Spleen (tissue), 13 donors: ENCODE measurements at regions of chr2 and their contacts with region 1.

Region 1: DNA sequence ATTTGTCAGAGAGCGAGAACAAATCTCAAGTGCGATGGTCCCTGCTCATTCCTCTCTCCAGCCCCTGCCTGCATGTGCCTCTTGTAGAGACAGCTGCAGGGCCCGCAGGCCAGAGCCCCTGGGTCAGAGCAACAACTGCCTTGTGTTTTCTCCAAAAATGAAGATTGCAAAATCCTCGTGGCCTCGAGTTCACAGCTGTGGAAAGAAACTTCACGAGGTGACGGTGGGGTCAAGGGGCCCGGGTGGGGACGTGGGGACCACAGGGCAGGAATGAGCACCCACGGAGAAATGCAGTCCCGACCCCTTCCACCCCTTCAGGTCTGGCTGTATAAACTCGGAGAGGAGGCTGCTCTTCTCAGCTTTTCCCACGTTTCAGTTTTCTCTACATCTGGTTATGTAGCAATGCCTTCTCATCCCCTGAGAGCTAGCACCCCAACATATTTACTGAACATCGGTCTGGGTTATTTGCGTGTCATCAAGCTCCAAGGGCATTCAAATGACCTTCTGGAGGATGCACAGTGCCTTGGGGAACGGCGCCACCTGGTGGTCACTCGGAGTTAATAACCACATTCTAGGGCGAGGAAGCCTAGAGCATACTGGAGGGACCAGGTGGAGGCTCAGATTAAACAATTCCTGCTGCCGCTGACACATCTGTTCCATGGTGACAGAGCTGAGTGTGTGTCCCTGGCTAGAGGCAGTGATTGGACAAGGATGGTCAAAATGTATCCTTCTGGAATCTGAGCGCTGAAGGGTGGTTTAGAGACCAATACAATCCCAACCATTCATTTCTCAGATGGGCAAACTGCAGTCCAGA is 91.4 kb upstream of the CYRIA start:
- DNase-seq: peak; percentile 94
- H3K4me3 ChIP-seq: no peak overlapping the region
- H3K27ac ChIP-seq: no peak overlapping the region
- H3K4me1 ChIP-seq: peaks cover 2 to 13% (median 7%) of the 10 kb centered on the region in 6 donors
- H3K27me3 ChIP-seq: no peaks in the 10 kb centered on the region
- CTCF ChIP-seq: peak; percentile 84 to 92 (median 87)
- POLR2A ChIP-seq: no peak

Region 2: DNA sequence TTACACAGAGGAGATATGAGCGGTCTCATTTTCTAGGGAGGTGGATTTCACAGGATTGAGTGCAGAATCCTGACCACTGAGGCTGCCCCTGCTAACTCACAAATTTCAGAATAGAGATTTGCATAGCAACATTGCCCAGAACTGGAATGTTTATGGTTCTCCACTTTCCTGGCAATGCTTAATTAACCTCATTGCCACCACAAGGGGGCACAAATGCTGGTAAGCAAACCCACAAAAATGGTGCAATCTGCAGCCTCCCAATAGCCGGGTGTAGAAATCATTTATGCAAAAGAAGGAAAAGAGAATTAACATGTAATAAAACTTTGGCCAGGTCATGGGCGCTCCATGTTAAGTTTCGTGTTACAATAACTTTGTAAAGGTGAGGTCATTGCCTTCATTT is 203.8 kb before region 1 on chr2:
- intact Hi-C with region 1: loop called (anchors 10 kb)
- DNase-seq: no peak
- H3K4me3 ChIP-seq: no peak overlapping the region
- H3K27ac ChIP-seq: no peak overlapping the region
- H3K4me1 ChIP-seq: no peaks in the 10 kb centered on the region
- H3K27me3 ChIP-seq: no peaks in the 10 kb centered on the region
- CTCF ChIP-seq: peak in 10 of 11 experiments; percentile 22 to 64 (median 50)
- POLR2A ChIP-seq: no peak

Region 3: DNA sequence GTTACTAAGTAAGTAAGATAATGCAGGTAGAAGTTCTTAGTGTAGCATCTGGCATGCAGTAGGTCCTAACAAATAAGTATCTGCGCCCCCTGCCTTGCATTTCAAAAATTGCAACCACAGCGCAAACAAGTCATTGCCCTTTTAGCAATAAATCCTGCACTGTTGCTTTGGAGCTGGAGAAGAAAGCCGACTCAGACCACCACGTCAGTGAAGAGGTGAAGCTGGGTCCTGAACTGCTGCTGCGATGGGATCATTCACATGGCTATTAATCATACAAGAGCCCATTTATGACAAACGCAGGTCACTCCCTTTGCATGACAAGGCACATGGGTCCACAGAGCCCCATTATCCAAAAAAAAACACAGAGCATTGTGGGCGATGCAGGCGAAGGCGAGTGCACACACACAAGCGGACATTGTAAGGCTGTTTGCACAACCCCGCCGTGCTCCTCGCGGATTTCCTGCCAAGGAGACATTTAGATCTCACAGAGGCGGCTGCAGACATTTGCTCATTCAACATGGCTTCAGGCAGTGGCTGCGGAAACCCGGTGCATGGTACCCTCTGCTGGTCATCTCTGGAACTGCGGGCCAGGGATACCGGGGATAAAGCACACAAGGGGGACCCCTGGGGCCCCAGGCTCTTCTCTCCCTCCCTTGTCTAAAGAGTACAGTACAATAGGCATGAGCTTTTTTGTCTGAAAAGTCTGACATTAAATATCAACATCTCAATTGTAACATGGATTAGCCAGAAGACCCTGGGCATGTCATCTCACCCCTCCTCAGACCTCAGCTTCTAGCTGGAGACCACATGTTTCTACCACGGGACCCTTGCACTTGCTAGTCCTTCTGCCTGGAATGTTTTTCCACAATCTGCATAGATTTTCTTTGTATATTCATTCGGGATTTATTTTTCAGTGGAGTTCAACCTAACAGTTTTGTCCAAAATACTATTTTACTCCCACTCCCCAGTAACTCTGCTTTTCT is 148.1 kb before region 1 on chr2:
- intact Hi-C with region 1: loop called (anchors 5 kb)
- DNase-seq: peak; percentile 94
- H3K4me3 ChIP-seq: peak overlapping the region; percentile 29 to 69 (median 40)
- H3K27ac ChIP-seq: peak overlapping the region in 4 of 8 donors; percentile 8 to 64 (median 58)
- H3K4me1 ChIP-seq: peaks cover 0 to 36% (median 19%) of the 10 kb centered on the region in 6 donors
- H3K27me3 ChIP-seq: no peaks in the 10 kb centered on the region
- CTCF ChIP-seq: peak; percentile 78 to 97 (median 91)
- POLR2A ChIP-seq: no peak

Region 4: GRCh38 chr2:16775068-16775898 is 18.2 kb after region 1 on chr2:
- intact Hi-C with region 1: no loop called
- DNase-seq: no peak
- H3K4me3 ChIP-seq: no peak overlapping the region
- H3K27ac ChIP-seq: no peak overlapping the region
- H3K4me1 ChIP-seq: no peaks in the 10 kb centered on the region
- H3K27me3 ChIP-seq: peaks cover 0 to 19% (median 0%) of the 10 kb centered on the region in 7 donors
- CTCF ChIP-seq: no peak
- POLR2A ChIP-seq: no peak

Region 5: GRCh38 chr2:16821692-16822091 is 64.7 kb after region 1 on chr2:
- intact Hi-C with region 1: no loop called
- DNase-seq: no peak
- H3K4me3 ChIP-seq: no peak overlapping the region
- H3K27ac ChIP-seq: no peak overlapping the region
- H3K4me1 ChIP-seq: no peaks in the 10 kb centered on the region
- H3K27me3 ChIP-seq: no peaks in the 10 kb centered on the region
- CTCF ChIP-seq: no peak
- POLR2A ChIP-seq: no peak